ENCODE measurements at regions of chr7 and their contacts with region 1.

Region 1: DNA sequence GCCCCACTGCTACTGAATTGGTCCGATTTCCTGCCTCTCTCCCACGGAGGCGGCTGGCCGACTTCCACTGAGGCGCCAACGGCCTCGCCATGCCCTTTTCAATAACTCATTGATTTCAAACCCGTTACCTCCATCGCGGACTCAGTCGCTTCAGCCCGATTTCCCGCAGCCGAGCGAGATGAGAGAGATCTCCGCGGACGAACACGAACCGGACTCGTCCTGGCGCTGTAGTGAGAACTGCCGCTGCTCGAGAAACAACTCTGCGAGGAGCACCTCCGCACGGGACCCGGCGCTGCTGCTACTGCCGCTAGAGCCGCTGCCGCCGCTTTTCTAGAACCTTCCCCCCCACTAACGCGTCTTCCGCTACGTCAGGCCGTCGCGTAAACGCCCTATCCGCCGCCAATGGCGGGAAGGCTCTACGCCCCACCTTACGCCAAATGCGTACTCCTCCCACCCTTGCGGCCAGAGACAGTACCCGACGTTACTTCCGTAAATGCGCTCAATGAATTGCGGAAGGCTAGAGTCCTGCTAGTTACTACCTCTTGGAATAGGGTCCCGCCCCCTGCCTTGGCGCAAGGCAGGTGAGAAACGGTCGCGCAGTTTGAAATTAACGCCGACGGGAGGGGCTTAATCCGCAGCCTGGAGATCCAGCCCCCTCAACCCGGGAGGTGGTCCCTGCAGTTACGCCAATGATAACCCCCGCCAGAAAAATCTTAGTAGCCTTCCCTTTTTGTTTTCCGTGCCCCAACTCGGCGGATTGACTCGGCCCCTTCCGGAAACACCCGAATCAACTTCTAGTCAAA is at the start of gene HNRNPA2B1:
- DNase-seq: peak; percentile 97
- H3K4me3 Mint-ChIP-seq: peak within 1 kb of the TSS; percentile 99
- H3K27ac Mint-ChIP-seq: peak within 1 kb of the TSS; percentile 100
- H3K4me1 Mint-ChIP-seq: peaks cover 44% of the 10 kb centered on the region
- H3K27me3 Mint-ChIP-seq: peaks cover 15% of the 10 kb centered on the region

Region 2: GRCh38 chr7:25812086-25812850 is 388.4 kb before region 1 on chr7:
- CTCF ChIA-PET with region 1: no interaction called
- DNase-seq: no peak
- H3K4me3 Mint-ChIP-seq: no peak overlapping the region
- H3K27ac Mint-ChIP-seq: no peak overlapping the region
- H3K4me1 Mint-ChIP-seq: no peaks in the 10 kb centered on the region
- H3K27me3 Mint-ChIP-seq: no peaks in the 10 kb centered on the region

Region 3: GRCh38 chr7:26160881-26161280 is 39.8 kb before region 1 on chr7:
- CTCF ChIA-PET with region 1: interaction called, 11 read pairs
- DNase-seq: no peak
- H3K4me3 Mint-ChIP-seq: no peak overlapping the region
- H3K27ac Mint-ChIP-seq: peak overlapping the region; percentile 9
- H3K4me1 Mint-ChIP-seq: peaks cover 44% of the 10 kb centered on the region
- H3K27me3 Mint-ChIP-seq: no peaks in the 10 kb centered on the region

Region 4: GRCh38 chr7:26284995-26285632 is 84.5 kb after region 1 on chr7:
- CTCF ChIA-PET with region 1: interaction called, 15 read pairs
- DNase-seq: no peak
- H3K4me3 Mint-ChIP-seq: no peak overlapping the region
- H3K27ac Mint-ChIP-seq: no peak overlapping the region
- H3K4me1 Mint-ChIP-seq: peaks cover 2% of the 10 kb centered on the region
- H3K27me3 Mint-ChIP-seq: peaks cover 21% of the 10 kb centered on the region

Region 5: DNA sequence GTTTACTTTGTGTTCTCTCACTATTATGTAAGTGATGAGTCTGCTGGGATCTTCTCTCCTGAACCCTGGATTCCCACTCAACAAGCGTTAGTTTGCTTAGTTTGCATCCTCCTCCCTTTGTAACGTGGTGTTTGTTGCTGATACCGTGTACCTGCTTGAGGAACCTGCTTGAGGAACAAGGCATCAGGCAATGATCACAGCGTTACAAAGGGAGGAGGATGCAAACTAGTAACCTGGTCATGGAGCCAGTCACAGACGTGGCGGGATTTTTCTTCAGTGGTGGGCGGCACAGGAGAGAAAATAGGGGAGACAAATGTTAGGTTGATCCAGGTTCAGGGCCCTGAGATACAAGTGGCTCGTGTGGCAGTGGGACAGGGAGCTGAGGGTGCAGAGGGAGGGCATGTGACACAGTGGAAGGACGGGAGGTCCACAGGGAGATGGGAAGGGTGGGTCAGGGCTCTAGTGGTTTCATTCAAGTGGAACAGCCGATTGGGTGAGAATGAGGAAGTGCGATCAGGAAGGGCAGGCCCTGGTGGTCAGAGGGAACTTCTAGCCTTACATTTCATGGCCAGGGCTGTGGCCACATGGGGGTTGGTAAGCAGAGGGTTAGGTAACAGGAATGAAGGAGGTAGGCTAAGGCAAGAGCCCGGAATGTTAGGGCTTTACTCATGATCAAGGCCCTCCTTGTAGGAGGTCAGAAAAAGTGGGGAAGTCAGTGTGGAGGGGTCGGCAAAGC is 129.0 kb after region 1 on chr7:
- CTCF ChIA-PET with region 1: no interaction called
- DNase-seq: no peak
- H3K4me3 Mint-ChIP-seq: no peak overlapping the region
- H3K27ac Mint-ChIP-seq: no peak overlapping the region
- H3K4me1 Mint-ChIP-seq: peaks cover 13% of the 10 kb centered on the region
- H3K27me3 Mint-ChIP-seq: no peaks in the 10 kb centered on the region

Region 6: GRCh38 chr7:26457696-26458327 is 257.2 kb after region 1 on chr7:
- CTCF ChIA-PET with region 1: no interaction called
- DNase-seq: no peak
- H3K4me3 Mint-ChIP-seq: no peak overlapping the region
- H3K27ac Mint-ChIP-seq: no peak overlapping the region
- H3K4me1 Mint-ChIP-seq: no peaks in the 10 kb centered on the region
- H3K27me3 Mint-ChIP-seq: peaks cover 13% of the 10 kb centered on the region

Measured in activated naive CD4-positive, alpha-beta T cell treated with anti-CD3 and anti-CD28 coated beads, Interleukin-2, amount 10 ng/mL, durations not matched to agents 7 days and 5 days (primary cell).